Prostate gland (tissue), 2 donors: ENCODE measurements at regions of chr14 and their contacts with region 1.

Region 1: GRCh38 chr14:92951912-92952471 is 29.0 kb downstream of the CHGA start:
- DNase-seq: peak; percentile 74
- H3K4me3 ChIP-seq: no peak overlapping the region
- H3K27ac ChIP-seq: no peak overlapping the region
- H3K4me1 ChIP-seq: no peaks in the 10 kb centered on the region
- H3K27me3 ChIP-seq: no peaks in the 10 kb centered on the region
- CTCF ChIP-seq: peak; percentile 91 to 98 (median 95)
- POLR2A ChIP-seq: no peak

Region 2: DNA sequence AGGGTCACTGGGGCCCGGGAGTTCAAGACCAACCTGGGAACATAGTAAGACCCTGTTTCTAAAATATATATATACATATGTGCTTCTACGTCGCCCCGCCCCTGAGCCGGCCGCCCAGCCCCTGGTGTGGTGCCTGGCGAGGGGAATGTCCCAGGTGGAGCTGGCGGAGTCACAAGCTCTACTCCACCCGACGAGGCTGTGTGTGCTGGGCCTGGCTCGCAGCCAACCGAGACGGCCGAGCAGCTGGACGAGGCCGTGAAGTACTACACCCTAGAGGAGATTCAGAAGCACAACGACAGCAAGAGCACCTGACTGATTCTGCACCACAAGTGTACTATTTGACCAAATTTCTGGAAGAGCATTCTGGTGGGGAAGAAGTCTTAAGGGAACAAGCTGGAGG is 185.9 kb after region 1 on chr14:
- intact Hi-C with region 1: loop called (anchors 2 kb)
- DNase-seq: peak; percentile 46
- H3K4me3 ChIP-seq: no peak overlapping the region
- H3K27ac ChIP-seq: no peak overlapping the region
- H3K4me1 ChIP-seq: no peaks in the 10 kb centered on the region
- H3K27me3 ChIP-seq: no peaks in the 10 kb centered on the region
- CTCF ChIP-seq: peak in 2 of 4 experiments; percentile 24 to 34
- POLR2A ChIP-seq: no peak

Region 3: GRCh38 chr14:93410021-93410420 is 458.0 kb after region 1 on chr14:
- intact Hi-C with region 1: no loop called
- DNase-seq: no peak
- H3K4me3 ChIP-seq: no peak overlapping the region
- H3K27ac ChIP-seq: no peak overlapping the region
- H3K4me1 ChIP-seq: no peaks in the 10 kb centered on the region
- H3K27me3 ChIP-seq: no peaks in the 10 kb centered on the region
- CTCF ChIP-seq: no peak
- POLR2A ChIP-seq: no peak